ENCODE measurements at regions of chrX and their contacts with region 1.

Region 1: GRCh38 chrX:106894392-106894909 is 8.7 kb downstream of the RIPPLY1 start:
- DNase-seq: peak in 4 of 5 donors; percentile 24 to 48 (median 38)
- ATAC-seq: peak in 3 of 4 donors; percentile 76 to 93 (median 78)
- H3K4me3 ChIP-seq: no peak overlapping the region
- H3K27ac ChIP-seq: no peak overlapping the region
- H3K4me1 ChIP-seq: peaks cover 0 to 3% (median 0%) of the 10 kb centered on the region in 12 donors
- H3K27me3 ChIP-seq: peaks cover 0 to 15% (median 0%) of the 10 kb centered on the region in 9 donors
- CTCF ChIP-seq: peak; percentile 60 to 89 (median 72)
- POLR2A ChIP-seq: no peak

Region 2: GRCh38 chrX:106952988-106953387 is 58.5 kb after region 1 on chrX:
- intact Hi-C with region 1: loop called in 8 of 10 experiments (anchors 5 to 10 kb)
- DNase-seq: no peak
- ATAC-seq: no peak
- H3K4me3 ChIP-seq: no peak overlapping the region
- H3K27ac ChIP-seq: no peak overlapping the region
- H3K4me1 ChIP-seq: no peaks in the 10 kb centered on the region
- H3K27me3 ChIP-seq: peaks cover 0 to 15% (median 0%) of the 10 kb centered on the region in 9 donors
- CTCF ChIP-seq: peak in 11 of 12 donors; percentile 15 to 45 (median 29)
- POLR2A ChIP-seq: no peak

Region 3: GRCh38 chrX:106959901-106960300 is 65.5 kb after region 1 on chrX:
- intact Hi-C with region 1: loop called in 2 of 10 experiments (anchors 5 to 10 kb)
- DNase-seq: no peak
- ATAC-seq: no peak
- H3K4me3 ChIP-seq: no peak overlapping the region
- H3K27ac ChIP-seq: no peak overlapping the region
- H3K4me1 ChIP-seq: no peaks in the 10 kb centered on the region
- H3K27me3 ChIP-seq: no peaks in the 10 kb centered on the region
- CTCF ChIP-seq: peak in 1 of 12 donors; percentile 6
- POLR2A ChIP-seq: no peak

Region 4: GRCh38 chrX:107288676-107289075 is 394.2 kb after region 1 on chrX:
- intact Hi-C with region 1: no loop called
- DNase-seq: no peak
- ATAC-seq: no peak
- H3K4me3 ChIP-seq: no peak overlapping the region
- H3K27ac ChIP-seq: no peak overlapping the region
- H3K4me1 ChIP-seq: no peaks in the 10 kb centered on the region
- H3K27me3 ChIP-seq: peaks cover 0 to 16% (median 0%) of the 10 kb centered on the region in 9 donors
- CTCF ChIP-seq: no peak
- POLR2A ChIP-seq: no peak